ENCODE measurements at regions of chr16 and their contacts with region 1.

Region 1: DNA sequence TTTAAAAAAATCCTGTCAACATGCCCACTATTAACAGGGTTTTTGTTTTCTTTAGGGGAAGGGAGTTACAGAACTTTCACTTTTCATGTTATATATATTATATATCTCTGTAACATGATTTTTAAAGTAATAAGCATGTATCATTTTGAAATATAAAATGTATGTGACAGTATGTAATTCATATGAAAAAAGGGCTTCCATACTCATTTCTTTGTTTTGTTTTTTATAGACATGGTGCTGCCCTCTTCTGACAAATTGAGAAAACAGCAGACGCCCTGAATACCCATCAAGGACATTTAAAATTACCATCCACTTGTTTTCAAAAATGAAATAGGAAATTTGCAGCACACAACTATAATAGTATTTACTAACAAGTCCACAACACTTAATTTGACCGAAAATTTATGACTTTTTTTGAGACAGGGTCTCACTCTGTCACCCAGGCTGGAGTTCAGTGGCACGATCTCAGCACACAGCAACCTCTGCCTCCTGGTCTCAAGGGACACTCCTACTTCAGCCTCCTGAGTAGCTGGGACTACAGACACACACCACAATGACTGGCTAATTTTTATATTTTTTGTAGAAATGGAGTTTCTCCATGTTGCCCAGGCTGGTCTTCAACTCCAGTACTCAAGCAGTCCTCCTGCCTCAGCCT is 30.4 kb downstream of the CFDP1 start:
- DNase-seq: no peak
- H3K4me3 Mint-ChIP-seq: no peak overlapping the region
- H3K27ac Mint-ChIP-seq: no peak overlapping the region
- H3K4me1 Mint-ChIP-seq: peaks cover 27% of the 10 kb centered on the region
- H3K27me3 Mint-ChIP-seq: no peaks in the 10 kb centered on the region

Region 2: GRCh38 chr16:75385507-75386152 is 17.3 kb before region 1 on chr16:
- CTCF ChIA-PET with region 1: interaction called, 6 read pairs
- intact Hi-C with region 1: loop called (anchors 1 kb)
- DNase-seq: no peak
- H3K4me3 Mint-ChIP-seq: no peak overlapping the region
- H3K27ac Mint-ChIP-seq: no peak overlapping the region
- H3K4me1 Mint-ChIP-seq: peaks cover 19% of the 10 kb centered on the region
- H3K27me3 Mint-ChIP-seq: peaks cover 2% of the 10 kb centered on the region

Measured in activated naive CD4-positive, alpha-beta T cell treated with anti-CD3 and anti-CD28 coated beads for 36 hours (primary cell).